H1 (cell line): ENCODE measurements at regions of chr14 and their contacts with region 1.

Region 1: DNA sequence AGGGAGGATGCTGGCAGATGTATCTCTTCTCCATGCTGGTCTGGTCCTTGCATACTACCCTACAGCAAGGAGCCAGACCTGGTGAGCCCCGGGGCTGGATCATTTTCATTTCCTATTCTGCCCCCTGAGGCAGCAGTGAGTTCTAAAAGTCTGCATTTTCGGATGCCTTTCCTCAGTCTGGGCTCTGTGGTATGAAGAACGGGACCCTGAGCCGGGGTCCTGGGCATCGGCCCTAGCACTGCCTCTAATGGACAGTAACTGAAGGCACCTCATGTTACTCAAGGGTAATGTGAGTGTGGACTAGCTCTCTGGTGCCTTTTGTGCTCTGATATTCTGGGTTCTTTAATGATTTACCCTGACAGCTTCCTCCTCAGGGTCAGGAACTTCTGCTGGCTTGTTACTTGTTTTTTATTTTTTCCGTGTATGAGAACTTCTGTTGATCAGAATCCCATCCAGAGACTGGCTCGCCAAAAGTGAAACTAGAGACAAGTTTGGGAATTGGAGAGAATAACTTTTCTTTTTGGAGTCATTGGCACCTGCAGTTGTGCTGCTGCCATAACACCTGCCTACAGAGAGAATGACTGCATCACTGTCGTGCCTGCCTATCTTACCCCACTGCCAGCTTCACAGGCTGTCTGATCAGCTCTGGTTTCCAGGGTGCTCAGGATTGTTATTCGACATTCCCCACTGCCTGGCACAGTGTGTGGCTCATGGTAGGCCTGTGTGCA is 62.3 kb downstream of the SUSD6 start:
- DNase-seq: no peak
- H3K4me3 ChIP-seq: no peak overlapping the region
- H3K27ac ChIP-seq: no peak overlapping the region
- H3K4me1 ChIP-seq: peaks cover 0 to 5% (median 4%) of the 10 kb centered on the region in 4 experiments; a peak in 3 of 7 replicates
- H3K27me3 ChIP-seq: no peaks in the 10 kb centered on the region
- CTCF ChIP-seq: peak in 2 of 3 experiments; percentile 14 to 23; a peak in 3 of 4 replicates
- EP300 ChIP-seq: no peak
- POLR2A ChIP-seq: no peak
- RAD21 ChIP-seq: peak; percentile 10 to 40; a peak in 3 of 4 replicates

Region 2: GRCh38 chr14:69475194-69475818 is 198.4 kb before region 1 on chr14:
- CTCF ChIA-PET with region 1: no interaction called
- POLR2A ChIA-PET with region 1: no interaction called
- DNase-seq: no peak
- H3K4me3 ChIP-seq: no peak overlapping the region
- H3K27ac ChIP-seq: no peak overlapping the region
- H3K4me1 ChIP-seq: no peaks in the 10 kb centered on the region
- H3K27me3 ChIP-seq: no peaks in the 10 kb centered on the region
- CTCF ChIP-seq: peak; percentile 40 to 57 (median 45); a peak in 3 of 4 replicates
- EP300 ChIP-seq: no peak
- POLR2A ChIP-seq: no peak
- RAD21 ChIP-seq: peak; percentile 35 to 45

Region 3: GRCh38 chr14:69685716-69686115 is 12.0 kb after region 1 on chr14:
- CTCF ChIA-PET with region 1: interaction called, 12 read pairs
- POLR2A ChIA-PET with region 1: no interaction called
- DNase-seq: no peak
- H3K4me3 ChIP-seq: no peak overlapping the region
- H3K27ac ChIP-seq: no peak overlapping the region
- H3K4me1 ChIP-seq: no peaks in the 10 kb centered on the region; a peak in 1 of 7 replicates
- H3K27me3 ChIP-seq: no peaks in the 10 kb centered on the region
- CTCF ChIP-seq: no peak
- EP300 ChIP-seq: no peak
- POLR2A ChIP-seq: no peak
- RAD21 ChIP-seq: no peak